CD8-positive, alpha-beta T cell (primary cell): ENCODE measurements at regions of chr21 and their contacts with region 1.

Region 1: DNA sequence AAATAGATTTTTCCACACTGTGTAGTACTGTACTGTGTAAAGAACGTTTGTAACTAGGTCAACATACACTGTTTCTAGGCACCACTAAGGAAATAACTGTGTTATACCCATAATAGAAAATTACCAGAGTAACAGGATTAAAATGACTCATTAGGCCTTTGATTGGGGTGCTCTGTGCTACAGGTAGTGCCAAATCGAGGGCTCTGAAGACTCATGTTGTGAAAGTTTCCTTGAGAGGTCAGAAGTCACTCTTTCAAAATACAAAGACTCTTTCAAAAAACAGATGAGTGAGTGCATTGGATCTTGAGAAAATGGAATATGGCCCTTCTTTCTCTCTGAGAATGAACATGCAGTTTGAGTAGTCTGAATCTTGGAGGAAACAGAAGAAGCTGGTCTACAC is 143.0 kb downstream of the MRPL39 start:
- DNase-seq: peak in 2 of 9 experiments; percentile 24 to 40
- ATAC-seq: peak; percentile 68
- H3K4me3 ChIP-seq: no peak overlapping the region
- H3K4me3 Mint-ChIP-seq: no peak overlapping the region
- H3K27ac ChIP-seq: no peak overlapping the region
- H3K27ac Mint-ChIP-seq: no peak overlapping the region
- H3K4me1 ChIP-seq: no peaks in the 10 kb centered on the region
- H3K4me1 Mint-ChIP-seq: peaks cover 11% of the 10 kb centered on the region
- H3K27me3 ChIP-seq: no peaks in the 10 kb centered on the region
- H3K27me3 Mint-ChIP-seq: no peaks in the 10 kb centered on the region
- CTCF ChIP-seq: no peak

Region 2: GRCh38 chr21:25441835-25442234 is 22.4 kb before region 1 on chr21:
- CTCF ChIA-PET with region 1: no interaction called
- POLR2A ChIA-PET with region 1: no interaction called
- intact Hi-C with region 1: loop called in 1 of 2 experiments (anchors 2 kb)
- DNase-seq: no peak
- ATAC-seq: no peak
- H3K4me3 ChIP-seq: no peak overlapping the region
- H3K4me3 Mint-ChIP-seq: no peak overlapping the region
- H3K27ac ChIP-seq: no peak overlapping the region
- H3K27ac Mint-ChIP-seq: no peak overlapping the region
- H3K4me1 ChIP-seq: no peaks in the 10 kb centered on the region
- H3K4me1 Mint-ChIP-seq: no peaks in the 10 kb centered on the region
- H3K27me3 ChIP-seq: no peaks in the 10 kb centered on the region
- H3K27me3 Mint-ChIP-seq: no peaks in the 10 kb centered on the region
- CTCF ChIP-seq: no peak

Region 3: DNA sequence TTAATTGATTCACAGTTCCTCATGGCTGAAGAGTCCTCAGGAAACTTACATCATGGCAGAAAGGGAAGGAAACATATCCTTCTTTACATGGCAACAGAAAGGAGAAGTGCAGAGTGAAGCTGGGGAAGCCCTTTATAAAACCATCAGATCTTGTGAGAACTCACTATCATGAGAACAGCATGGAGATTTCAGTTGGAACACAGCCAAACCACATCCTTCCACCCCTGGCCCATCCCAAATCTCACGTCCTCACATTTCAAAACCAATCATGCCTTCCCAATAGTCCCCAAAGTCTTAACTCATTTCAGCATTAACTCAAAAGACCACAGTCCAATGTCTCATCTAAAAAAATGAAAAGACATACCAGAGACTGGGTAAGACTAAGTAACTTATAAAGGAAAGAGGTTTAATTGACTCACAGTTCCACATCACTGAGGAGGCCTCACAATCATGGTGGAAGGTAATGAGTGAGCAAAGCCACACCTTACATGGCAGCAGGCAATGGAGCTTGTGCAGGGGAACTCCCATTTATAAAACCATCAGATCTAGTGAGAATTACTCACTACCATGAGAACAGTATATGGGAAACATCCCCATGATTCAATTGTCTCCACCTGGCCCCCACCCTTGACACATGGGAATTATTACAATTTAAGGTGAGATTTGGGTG is 37.9 kb after region 1 on chr21:
- CTCF ChIA-PET with region 1: no interaction called
- POLR2A ChIA-PET with region 1: no interaction called
- intact Hi-C with region 1: loop called in 1 of 2 experiments (anchors 5 kb)
- DNase-seq: peak in 1 of 9 experiments; percentile 16
- ATAC-seq: no peak
- H3K4me3 ChIP-seq: no peak overlapping the region
- H3K4me3 Mint-ChIP-seq: no peak overlapping the region
- H3K27ac ChIP-seq: no peak overlapping the region
- H3K27ac Mint-ChIP-seq: no peak overlapping the region
- H3K4me1 ChIP-seq: no peaks in the 10 kb centered on the region
- H3K4me1 Mint-ChIP-seq: peaks cover 4% of the 10 kb centered on the region
- H3K27me3 ChIP-seq: no peaks in the 10 kb centered on the region
- H3K27me3 Mint-ChIP-seq: no peaks in the 10 kb centered on the region
- CTCF ChIP-seq: no peak